HEK293 (cell line): ENCODE measurements at regions of chrX and their contacts with region 1.

Region 1: GRCh38 chrX:41796577-41796976 is 72.6 kb downstream of the GPR82 start:
- H3K4me3 ChIP-seq: no peak overlapping the region
- H3K27ac ChIP-seq: no peak overlapping the region
- H3K4me1 ChIP-seq: no peaks in the 10 kb centered on the region
- CTCF ChIP-seq: no peak

Region 2: DNA sequence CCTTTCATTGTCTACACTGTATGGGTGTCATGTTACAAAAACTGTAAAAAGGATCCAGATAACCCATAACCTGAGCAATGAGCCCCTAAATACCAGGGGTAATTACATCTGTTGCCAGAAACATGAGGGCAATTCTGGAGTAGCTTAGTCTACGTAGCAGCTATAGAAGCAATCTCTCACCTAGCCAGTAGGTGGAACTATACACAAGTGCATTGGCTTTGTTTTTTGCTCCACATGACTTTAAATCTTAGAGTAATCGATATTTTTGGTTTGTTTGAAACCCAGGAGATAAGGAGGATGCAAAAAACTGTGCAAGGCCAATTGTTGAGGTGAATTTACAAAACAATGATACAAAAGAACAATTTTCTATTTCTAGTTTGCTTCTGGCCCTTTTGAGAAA is 15.1 kb before region 1 on chrX:
- CTCF ChIA-PET with region 1: interaction called, 16 read pairs
- POLR2A ChIA-PET with region 1: no interaction called
- H3K4me3 ChIP-seq: no peak overlapping the region
- H3K27ac ChIP-seq: no peak overlapping the region
- H3K4me1 ChIP-seq: peaks cover 8% of the 10 kb centered on the region
- CTCF ChIP-seq: no peak

Region 3: DNA sequence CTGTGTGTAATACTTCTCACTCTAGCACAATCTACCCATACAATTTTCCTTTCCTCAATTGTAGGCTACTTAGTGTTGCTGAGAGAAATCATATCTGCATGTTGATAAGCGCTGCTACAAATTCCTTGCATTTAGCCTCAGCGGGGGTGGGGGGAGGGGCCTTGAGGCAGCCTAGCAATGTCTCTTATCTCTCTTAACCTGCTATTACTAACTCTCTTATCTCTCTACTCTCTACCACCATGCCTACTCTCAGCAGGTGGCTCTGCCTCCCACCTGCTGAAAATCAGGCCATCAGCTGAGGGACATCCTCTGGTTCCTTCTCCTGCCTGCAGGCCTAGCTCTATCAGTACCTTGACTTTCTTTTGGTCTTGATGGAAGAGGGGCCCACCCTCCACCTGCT is 26.3 kb after region 1 on chrX:
- CTCF ChIA-PET with region 1: interaction called, 12 read pairs
- POLR2A ChIA-PET with region 1: no interaction called
- H3K4me3 ChIP-seq: no peak overlapping the region
- H3K27ac ChIP-seq: no peak overlapping the region
- H3K4me1 ChIP-seq: 0 out of 2 replicates have a peak, but pooled peaks cover 3% of the 10 kb centered on the region
- CTCF ChIP-seq: no peak